ENCODE measurements at regions of chr19 and their contacts with region 1.

Region 1: DNA sequence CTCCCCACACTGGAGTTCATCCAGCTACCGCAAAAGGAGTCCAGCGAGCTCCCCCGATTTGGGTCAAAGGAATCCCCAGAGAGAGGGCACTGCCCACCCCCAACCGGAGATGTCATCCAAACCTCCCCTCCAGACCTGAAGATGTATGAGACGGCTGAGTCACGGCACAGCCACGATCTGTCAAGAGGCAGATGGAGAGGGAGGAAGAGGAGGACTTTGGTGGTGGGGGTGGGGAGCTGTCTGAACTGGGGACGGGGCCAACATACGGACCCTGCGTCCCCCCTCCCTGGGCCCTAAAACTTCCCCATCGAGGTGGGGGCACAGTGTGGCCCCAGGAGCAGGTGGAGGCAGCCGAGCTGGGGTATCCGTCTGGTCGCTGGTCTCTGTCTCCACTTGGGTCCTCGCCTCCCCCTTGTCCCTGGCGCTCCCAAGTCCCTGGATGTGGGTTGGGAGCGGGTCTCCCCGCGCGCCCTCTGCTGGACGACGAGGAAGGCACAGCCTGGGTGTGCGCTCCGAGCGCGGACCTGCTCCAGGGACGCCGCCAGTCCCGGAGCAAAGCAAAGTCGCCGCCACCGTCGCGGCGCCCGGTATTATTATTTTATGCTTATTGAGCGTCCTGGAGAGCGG is 3.8 kb downstream of the PDE4A start:
- DNase-seq: peak; percentile 92
- ATAC-seq: peak; percentile 72
- H3K4me3 Mint-ChIP-seq: peak overlapping the region; percentile 66
- H3K27ac Mint-ChIP-seq: no peak overlapping the region
- H3K4me1 Mint-ChIP-seq: peaks cover 10% of the 10 kb centered on the region
- H3K27me3 Mint-ChIP-seq: peaks cover 96% of the 10 kb centered on the region
- CTCF ChIP-seq: peak; percentile 93

Region 2: DNA sequence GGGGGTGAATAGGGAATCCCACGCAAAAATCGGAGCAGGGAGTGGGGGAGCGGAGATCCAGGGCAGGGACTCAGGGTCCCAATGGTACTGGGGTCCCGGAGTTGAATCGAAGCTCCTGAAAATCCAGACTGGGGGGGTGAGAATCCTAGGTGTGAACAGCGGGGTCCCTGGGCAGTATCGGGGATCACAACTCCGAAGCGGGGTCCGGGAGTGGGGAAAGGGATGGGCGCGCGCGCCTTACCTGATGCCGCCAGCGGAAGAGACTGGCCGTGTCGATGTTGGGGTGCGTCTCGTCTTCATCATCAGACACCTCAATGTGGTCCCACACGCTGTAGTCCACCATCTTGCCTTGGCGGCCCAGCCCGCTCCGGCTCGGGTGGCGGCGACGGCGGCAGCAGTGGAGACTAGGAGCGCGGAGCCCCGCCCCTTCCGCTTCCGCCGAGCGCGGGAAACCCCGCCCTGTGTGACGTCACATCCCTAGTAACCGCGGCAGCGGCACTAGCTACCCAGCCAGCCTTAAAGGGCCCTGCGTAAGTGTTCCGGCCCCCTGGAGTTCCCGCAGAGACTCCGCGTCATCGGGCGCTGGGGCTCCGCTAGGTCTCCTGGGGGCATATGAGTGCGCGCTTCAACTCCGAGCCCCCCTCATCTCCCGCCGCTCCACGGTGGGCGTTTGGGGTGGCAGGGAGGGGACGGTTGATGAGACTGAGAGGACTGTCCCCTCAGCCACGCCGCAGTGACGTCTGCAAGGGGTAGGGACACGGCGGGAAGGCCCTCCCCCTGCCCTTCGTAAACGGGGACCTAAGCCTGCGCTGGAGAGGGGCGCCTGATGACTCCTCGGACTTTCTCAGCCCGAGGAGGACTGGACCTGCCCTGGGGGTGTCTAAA is 20.7 kb before region 1 on chr19 and contains the start of gene CDC37:
- CTCF ChIA-PET with region 1: interaction called, 229 read pairs
- POLR2A ChIA-PET with region 1: no interaction called
- DNase-seq: peak; percentile 98
- ATAC-seq: peak; percentile 79
- H3K4me3 Mint-ChIP-seq: peak within 1 kb of the TSS; percentile 96
- H3K27ac Mint-ChIP-seq: peak within 1 kb of the TSS; percentile 89
- H3K4me1 Mint-ChIP-seq: peaks cover 19% of the 10 kb centered on the region
- H3K27me3 Mint-ChIP-seq: peaks cover 40% of the 10 kb centered on the region
- CTCF ChIP-seq: no peak
- total RNA-seq, gene CDC37: 163 to 204 TPM (median 164 TPM) in 3 replicates

Measured in WTC11 (cell line).